Activated CD4-positive, alpha-beta memory T cell treated with anti-CD3 and anti-CD28 coated beads for 36 hours (primary cell): ENCODE measurements at regions of chr6 and their contacts with region 1.

Region 1: GRCh38 chr6:149963462-149964307 is at the start of gene ULBP1:
- DNase-seq: peak; percentile 91
- H3K4me3 Mint-ChIP-seq: peak within 1 kb of the TSS; percentile 86
- H3K27ac Mint-ChIP-seq: peak within 1 kb of the TSS; percentile 70
- H3K4me1 Mint-ChIP-seq: peaks cover 29% of the 10 kb centered on the region
- H3K27me3 Mint-ChIP-seq: peaks cover 75% of the 10 kb centered on the region
- total RNA-seq, gene ULBP1: 1.8 to 2.2 TPM

Region 2: GRCh38 chr6:149910721-149911151 is 52.9 kb before region 1 on chr6:
- CTCF ChIA-PET with region 1: no interaction called
- POLR2A ChIA-PET with region 1: no interaction called
- intact Hi-C with region 1: no loop called
- DNase-seq: no peak
- H3K4me3 Mint-ChIP-seq: no peak overlapping the region
- H3K27ac Mint-ChIP-seq: no peak overlapping the region
- H3K4me1 Mint-ChIP-seq: no peaks in the 10 kb centered on the region
- H3K27me3 Mint-ChIP-seq: peaks cover 12% of the 10 kb centered on the region

Region 3: DNA sequence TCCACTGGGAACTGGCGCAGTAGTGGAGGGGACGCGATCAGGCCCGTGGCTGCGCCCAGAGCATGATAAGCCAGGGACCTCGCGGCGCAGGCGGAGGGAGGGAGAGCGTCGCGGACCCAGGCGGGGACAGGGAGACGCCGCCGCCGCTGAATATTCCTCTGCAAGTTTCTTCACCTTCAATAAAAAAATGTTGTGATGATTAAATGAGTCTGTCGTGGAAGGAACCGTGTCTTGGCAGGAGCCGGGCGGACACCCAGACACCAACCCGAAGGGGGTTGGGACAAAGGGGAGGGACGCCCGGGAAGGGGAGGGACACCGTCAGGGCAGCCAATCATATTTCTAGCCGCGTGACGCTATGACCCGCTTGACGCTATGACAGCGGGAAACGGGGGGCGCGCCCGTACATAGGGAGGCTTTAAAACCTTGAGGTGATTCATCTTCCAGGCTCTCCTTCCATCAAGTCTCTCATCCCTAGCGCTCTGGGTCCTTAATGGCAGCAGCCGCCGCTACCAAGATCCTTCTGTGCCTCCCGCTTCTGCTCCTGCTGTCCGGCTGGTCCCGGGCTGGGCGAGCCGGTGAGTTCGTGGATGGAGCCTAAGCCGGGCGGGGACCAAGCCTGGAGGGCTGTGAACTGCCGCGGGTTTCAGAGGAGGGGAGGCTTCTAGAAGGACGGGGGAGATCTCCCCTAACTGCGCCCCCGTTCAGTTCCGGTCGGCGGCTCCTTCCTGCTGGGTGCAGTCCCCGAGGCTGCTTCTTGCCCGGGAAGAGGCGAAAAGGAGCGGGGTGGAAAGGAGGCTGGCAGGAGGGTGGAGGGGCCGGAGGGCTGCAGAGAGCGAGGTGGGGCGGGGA is 21.9 kb before region 1 on chr6 and contains the start of gene ULBP2:
- CTCF ChIA-PET with region 1: no interaction called
- POLR2A ChIA-PET with region 1: no interaction called
- intact Hi-C with region 1: loop called (anchors 1 kb)
- DNase-seq: peak; percentile 94
- H3K4me3 Mint-ChIP-seq: peak within 1 kb of the TSS; percentile 85
- H3K27ac Mint-ChIP-seq: peak within 1 kb of the TSS; percentile 75
- H3K4me1 Mint-ChIP-seq: peaks cover 37% of the 10 kb centered on the region
- H3K27me3 Mint-ChIP-seq: peaks cover 47% of the 10 kb centered on the region
- total RNA-seq, gene ULBP2: 0.90 to 1.2 TPM

Region 4: GRCh38 chr6:149990618-149991471 is 27.2 kb after region 1 on chr6:
- CTCF ChIA-PET with region 1: no interaction called
- POLR2A ChIA-PET with region 1: interaction called, 3 read pairs
- intact Hi-C with region 1: loop called (anchors 1 kb)
- DNase-seq: peak; percentile 46
- H3K4me3 Mint-ChIP-seq: peak overlapping the region; percentile 66
- H3K27ac Mint-ChIP-seq: peak overlapping the region; percentile 11
- H3K4me1 Mint-ChIP-seq: peaks cover 22% of the 10 kb centered on the region
- H3K27me3 Mint-ChIP-seq: peaks cover 80% of the 10 kb centered on the region